Activated CD4-positive, alpha-beta T cell treated with anti-CD3 and anti-CD28 coated beads, Interleukin-2, amount 10 ng/mL, durations not matched to agents 7 days and 5 days (primary cell): ENCODE measurements at regions of chr6 and their contacts with region 1.

Region 1: DNA sequence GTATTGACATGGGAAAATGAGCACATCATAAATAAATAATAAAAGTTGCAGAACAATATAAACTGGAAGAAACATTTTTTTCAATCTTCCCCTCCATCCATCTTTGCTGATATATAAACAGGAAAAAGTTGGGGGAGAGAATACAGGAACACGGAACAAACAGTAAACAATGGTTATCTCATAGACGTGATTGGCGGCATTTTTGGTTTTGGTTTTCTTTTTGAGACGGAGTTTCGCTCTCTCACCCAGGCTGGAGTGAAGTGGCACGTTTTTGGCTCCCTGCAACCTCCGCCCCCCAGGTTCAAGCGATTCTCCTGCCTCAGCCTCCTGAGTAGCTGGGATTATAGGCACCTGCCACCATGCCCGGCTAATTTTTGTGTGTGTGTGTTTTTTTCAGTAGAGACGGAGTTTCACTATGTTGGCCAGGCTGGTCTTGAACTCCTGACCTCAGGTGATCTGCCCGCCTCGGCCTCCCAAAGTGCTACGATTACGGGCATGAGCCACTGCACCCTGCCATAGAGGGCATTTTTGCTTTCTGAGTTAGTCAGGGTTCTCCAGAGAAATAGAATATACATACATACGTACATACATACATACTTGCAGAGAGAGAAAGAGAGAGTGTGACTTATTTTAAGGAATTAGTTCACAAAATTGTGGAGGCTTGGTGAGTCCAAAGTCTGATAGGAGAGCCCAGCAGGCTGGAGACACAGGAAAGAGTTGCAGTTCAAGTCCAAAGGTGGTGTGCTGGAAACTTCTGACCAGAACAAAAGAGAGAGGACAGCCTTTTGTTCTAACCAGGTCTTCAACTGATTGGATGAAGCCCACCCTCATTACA is 22.6 kb downstream of the GNL1 start:
- DNase-seq: peak; percentile 31
- H3K4me3 Mint-ChIP-seq: peak overlapping the region; percentile 56
- H3K27ac Mint-ChIP-seq: peak overlapping the region; percentile 90
- H3K4me1 Mint-ChIP-seq: peaks cover 42% of the 10 kb centered on the region
- H3K27me3 Mint-ChIP-seq: peaks cover 7% of the 10 kb centered on the region

Region 2: GRCh38 chr6:30483677-30484279 is 49.9 kb before region 1 on chr6:
- CTCF ChIA-PET with region 1: interaction called, 10 read pairs
- POLR2A ChIA-PET with region 1: interaction called, 3 read pairs
- DNase-seq: peak; percentile 62
- H3K4me3 Mint-ChIP-seq: no peak overlapping the region
- H3K27ac Mint-ChIP-seq: no peak overlapping the region
- H3K4me1 Mint-ChIP-seq: peaks cover 33% of the 10 kb centered on the region
- H3K27me3 Mint-ChIP-seq: peaks cover 43% of the 10 kb centered on the region

Region 3: DNA sequence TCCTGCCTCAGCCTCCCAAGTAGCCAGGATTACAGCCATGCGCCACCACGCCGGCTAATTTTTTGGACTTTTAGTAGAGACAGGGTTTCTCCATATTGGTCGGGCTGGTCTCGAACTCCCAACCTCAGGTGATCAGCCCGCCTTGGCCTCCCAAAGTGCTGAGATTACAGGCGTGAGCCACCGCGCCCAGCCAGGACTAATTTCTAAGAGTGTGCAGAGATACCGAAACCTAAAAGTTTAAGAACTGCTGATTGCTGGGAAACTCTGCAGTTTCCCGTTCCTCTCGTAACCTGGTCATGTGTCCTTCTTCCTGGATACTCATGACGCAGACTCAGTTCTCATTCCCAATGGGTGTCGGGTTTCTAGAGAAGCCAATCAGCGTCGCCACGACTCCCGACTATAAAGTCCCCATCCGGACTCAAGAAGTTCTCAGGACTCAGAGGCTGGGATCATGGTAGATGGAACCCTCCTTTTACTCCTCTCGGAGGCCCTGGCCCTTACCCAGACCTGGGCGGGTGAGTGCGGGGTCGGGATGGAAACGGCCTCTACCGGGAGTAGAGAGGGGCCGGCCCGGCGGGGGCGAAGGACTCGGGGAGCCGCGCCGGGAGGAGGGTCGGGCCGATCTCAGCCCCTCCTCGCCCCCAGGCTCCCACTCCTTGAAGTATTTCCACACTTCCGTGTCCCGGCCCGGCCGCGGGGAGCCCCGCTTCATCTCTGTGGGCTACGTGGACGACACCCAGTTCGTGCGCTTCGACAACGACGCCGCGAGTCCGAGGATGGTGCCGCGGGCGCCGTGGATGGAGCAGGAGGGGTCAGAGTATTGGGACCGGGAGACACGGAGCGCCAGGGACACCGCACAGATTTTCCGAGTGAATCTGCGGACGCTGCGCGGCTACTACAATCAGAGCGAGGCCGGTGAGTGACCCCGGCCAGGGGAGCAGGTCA is 44.3 kb before region 1 on chr6 and contains the start of gene HLA-E:
- CTCF ChIA-PET with region 1: interaction called, 12 read pairs
- POLR2A ChIA-PET with region 1: interaction called, 11 read pairs
- DNase-seq: peak; percentile 97
- H3K4me3 Mint-ChIP-seq: peak within 1 kb of the TSS; percentile 100
- H3K27ac Mint-ChIP-seq: peak within 1 kb of the TSS; percentile 96
- H3K4me1 Mint-ChIP-seq: peaks cover 51% of the 10 kb centered on the region
- H3K27me3 Mint-ChIP-seq: no peaks in the 10 kb centered on the region
- total RNA-seq, gene HLA-E: 706 to 753 TPM

Region 4: DNA sequence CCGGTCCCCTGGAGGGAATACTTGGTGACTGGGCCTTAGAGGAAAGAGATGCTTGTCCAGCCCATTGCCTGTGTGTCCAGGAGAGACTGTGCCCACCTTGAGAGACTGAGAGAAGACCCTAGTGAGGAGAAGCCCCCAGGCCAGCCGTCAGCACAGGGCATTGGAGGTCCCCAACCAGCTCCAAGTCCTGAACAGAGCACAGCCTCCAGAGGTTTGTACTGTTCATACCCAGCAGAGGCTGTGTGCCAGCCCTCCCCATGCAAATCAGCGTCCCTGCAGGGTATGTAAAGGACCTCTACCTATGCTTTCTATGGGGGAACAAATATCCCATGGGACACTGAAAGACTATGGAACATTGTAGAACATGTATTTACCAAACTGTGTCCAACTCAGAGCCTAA is 36.0 kb before region 1 on chr6:
- CTCF ChIA-PET with region 1: interaction called, 12 read pairs
- POLR2A ChIA-PET with region 1: interaction called, 9 read pairs
- DNase-seq: no peak
- H3K4me3 Mint-ChIP-seq: no peak overlapping the region
- H3K27ac Mint-ChIP-seq: no peak overlapping the region
- H3K4me1 Mint-ChIP-seq: peaks cover 60% of the 10 kb centered on the region
- H3K27me3 Mint-ChIP-seq: no peaks in the 10 kb centered on the region

Region 5: DNA sequence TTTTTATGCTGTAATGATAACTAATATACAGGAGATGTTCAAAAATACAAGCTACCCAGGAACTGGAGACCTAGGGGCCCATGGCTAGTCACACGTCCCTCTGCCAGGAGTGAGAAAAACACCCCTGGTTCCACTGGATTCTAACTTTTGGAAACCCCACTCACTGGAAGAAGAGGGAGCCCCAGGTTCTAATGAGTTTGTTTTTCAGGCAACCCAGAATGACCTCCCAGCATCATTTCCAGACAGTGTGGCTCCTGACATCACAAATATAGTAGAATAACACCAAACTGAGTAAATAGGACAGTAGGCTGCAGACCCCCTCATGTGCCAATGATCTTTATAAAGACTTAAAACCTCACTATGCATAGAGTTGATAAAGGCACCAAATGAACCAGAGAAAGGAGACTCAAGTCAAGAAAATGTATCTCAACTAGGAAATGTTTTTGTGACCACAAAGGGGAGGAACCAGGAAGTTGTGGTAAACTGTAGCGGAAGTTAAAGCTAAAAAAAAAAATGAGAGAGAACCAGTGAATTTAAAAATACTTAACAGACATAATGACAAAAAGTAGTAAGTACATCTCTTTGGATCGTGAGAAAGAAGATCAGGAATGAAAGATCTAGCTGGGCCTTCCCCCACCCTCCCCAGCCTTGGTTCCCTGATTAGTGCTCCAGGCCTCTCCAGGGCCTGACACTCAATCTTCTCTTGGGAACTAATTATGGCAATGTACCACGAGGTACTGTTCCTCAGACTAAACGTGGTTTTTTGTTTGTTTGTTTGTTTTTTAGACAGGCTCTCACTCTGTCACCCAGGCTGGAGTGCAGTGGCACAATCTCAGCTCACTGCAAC is 24.6 kb before region 1 on chr6:
- CTCF ChIA-PET with region 1: interaction called, 10 read pairs
- POLR2A ChIA-PET with region 1: no interaction called
- DNase-seq: peak; percentile 68
- H3K4me3 Mint-ChIP-seq: peak overlapping the region; percentile 71
- H3K27ac Mint-ChIP-seq: peak overlapping the region; percentile 90
- H3K4me1 Mint-ChIP-seq: peaks cover 51% of the 10 kb centered on the region
- H3K27me3 Mint-ChIP-seq: no peaks in the 10 kb centered on the region

Region 6: DNA sequence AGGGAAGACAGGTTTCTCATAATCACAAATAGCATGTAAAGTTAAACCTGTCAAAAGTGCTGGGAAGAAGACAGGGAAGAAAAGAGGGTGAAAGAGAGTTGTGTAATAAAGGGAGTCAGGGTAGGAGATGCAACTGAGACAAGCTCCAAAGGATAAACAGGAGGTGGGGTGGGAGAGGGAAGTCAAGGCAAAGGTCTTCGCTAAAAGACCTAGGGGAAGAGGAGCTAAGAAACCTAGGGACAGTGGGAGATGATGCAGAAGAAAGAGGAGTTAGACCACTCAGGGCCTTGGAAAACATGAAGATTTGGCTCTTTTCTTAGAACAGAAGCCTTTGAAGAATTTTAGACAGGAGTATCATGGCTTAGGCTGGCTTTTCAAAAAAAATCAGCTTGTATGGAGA is 30.4 kb after region 1 on chr6:
- CTCF ChIA-PET with region 1: no interaction called
- POLR2A ChIA-PET with region 1: no interaction called
- DNase-seq: no peak
- H3K4me3 Mint-ChIP-seq: no peak overlapping the region
- H3K27ac Mint-ChIP-seq: no peak overlapping the region
- H3K4me1 Mint-ChIP-seq: peaks cover 21% of the 10 kb centered on the region
- H3K27me3 Mint-ChIP-seq: no peaks in the 10 kb centered on the region